ENCODE measurements at regions of chr1 and their contacts with region 1.

Region 1: GRCh38 chr1:179241523-179242097 is 12.1 kb upstream of the ABL2 start:
- DNase-seq: no peak
- ATAC-seq: no peak
- H3K4me3 ChIP-seq: no peak overlapping the region
- H3K27ac ChIP-seq: no peak overlapping the region
- H3K4me1 ChIP-seq: no peaks in the 10 kb centered on the region
- H3K27me3 ChIP-seq: no peaks in the 10 kb centered on the region
- CTCF ChIP-seq: no peak

Region 2: DNA sequence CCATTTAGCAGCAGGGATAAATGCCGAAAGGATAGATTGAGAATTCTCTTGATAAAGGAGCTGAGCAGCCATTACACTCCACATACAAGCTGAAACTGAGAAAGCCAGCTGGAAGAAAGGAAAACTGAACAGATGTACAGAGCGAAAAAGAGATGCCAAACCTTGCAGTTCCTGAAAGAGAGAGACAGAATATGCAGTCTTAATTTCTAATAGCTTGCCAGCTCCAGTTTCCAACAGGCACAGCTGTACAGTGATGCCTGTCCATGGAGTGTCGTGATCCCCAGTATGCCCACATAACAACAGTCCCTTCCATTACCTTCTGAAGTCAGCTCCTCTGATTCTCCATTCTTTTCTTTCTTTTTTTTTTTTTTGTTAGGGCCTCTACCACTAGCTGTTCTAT is 34.8 kb before region 1 on chr1:
- CTCF ChIA-PET with region 1: no interaction called
- POLR2A ChIA-PET with region 1: interaction called, 10 read pairs
- in situ Hi-C with region 1: no loop called
- intact Hi-C with region 1: no loop called
- DNase-seq: no peak
- ATAC-seq: no peak
- H3K4me3 ChIP-seq: no peak overlapping the region
- H3K27ac ChIP-seq: no peak overlapping the region
- H3K4me1 ChIP-seq: no peaks in the 10 kb centered on the region
- H3K27me3 ChIP-seq: no peaks in the 10 kb centered on the region
- CTCF ChIP-seq: no peak

Measured in Panc1 (cell line).